Right ventricle myocardium superior (tissue), 1 donor: ENCODE measurements at regions of chr20 and their contacts with region 1.

Region 1: GRCh38 chr20:62302341-62303058 is at the start of gene ADRM1:
- DNase-seq: peak; percentile 97
- ATAC-seq: peak; percentile 94
- total RNA-seq, gene ADRM1: 68.5 TPM

Region 2: DNA sequence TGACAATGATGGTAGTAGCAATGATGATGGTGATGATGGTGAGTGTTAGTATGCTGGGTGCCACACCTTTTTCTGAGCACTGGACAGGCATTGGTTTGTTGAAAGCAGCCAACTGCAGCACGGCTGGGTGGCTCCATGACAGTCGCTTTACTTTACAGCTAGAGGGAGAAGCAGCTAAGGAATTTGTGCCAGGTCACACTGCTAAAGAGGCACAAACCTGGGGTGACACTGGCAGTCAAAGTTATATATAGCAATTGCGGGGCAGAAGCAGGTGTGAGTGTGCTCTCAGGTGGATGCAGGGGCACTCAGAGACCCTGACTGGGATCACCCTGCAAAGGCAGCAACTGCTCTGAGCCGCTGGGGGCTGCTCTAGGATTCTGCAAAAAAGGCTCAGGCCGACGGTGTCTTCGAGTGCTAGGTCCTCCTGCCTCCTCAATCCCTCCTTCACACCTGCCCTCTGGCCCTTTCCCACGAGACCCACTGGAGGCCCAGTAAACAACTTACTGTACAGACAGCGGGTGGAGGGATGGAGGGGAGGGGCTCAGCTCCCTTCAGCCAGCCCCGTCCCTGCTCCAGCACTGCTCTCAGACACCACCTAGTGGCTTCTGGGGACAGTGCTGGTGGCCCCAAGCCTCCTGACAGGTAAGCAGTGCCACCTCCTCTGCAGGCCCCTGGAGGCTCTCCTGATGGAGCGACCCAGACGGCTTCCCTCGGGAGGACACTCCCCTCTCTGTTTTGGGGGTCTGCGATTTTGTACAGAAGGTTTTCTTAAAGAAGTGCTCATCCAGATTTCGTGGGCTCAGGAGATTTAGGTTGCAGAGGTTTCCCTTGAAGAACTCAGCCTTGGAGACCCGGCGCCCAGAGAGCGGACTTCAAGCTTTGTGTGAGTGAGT is 80.1 kb after region 1 on chr20:
- intact Hi-C with region 1: loop called (anchors 2 kb)
- DNase-seq: peak; percentile 85
- ATAC-seq: peak; percentile 73